Posterior vena cava (tissue), 2 donors: ENCODE measurements at regions of chr1 and their contacts with region 1.

Region 1: GRCh38 chr1:192787914-192788585 is 20.8 kb upstream of the RGS2 start:
- DNase-seq: peak; percentile 87

Region 2: GRCh38 chr1:192732787-192733186 is 55.3 kb before region 1 on chr1:
- intact Hi-C with region 1: loop called in 1 of 2 experiments (anchors 10 kb)
- DNase-seq: no peak